Prostate gland (tissue), 2 donors: ENCODE measurements at regions of chr17 and their contacts with region 1.

Region 1: DNA sequence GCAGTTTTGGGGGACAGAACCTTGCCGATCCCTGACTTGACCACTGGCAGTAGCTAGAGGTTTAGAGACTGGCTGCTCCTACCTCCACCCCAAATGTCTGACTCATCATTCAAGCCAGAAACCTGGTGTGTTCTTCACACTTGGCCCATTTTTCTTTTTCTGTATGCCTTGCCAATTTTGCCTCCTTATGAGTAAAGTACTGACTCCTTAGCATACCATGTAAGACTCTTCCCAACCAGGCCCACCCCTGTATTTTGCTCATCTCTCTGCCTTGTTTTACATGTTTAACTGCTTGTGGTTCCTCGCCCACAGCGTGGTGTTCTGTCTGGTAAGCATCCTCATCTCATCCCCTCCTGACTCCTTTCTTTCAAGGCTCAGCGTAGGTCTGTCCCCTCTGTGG is 37.9 kb downstream of the NUP88 start:
- DNase-seq: no peak
- H3K4me3 ChIP-seq: no peak overlapping the region
- H3K27ac ChIP-seq: no peak overlapping the region
- H3K4me1 ChIP-seq: no peaks in the 10 kb centered on the region
- H3K27me3 ChIP-seq: no peaks in the 10 kb centered on the region
- CTCF ChIP-seq: no peak
- POLR2A ChIP-seq: no peak

Region 2: GRCh38 chr17:4709794-4710692 is 671.5 kb before region 1 on chr17 and contains the start of gene ARRB2:
- intact Hi-C with region 1: no loop called
- DNase-seq: peak; percentile 97
- H3K4me3 ChIP-seq: peak within 1 kb of the TSS; percentile 65 to 66
- H3K27ac ChIP-seq: peak within 1 kb of the TSS; percentile 87
- H3K4me1 ChIP-seq: peaks cover 5% of the 10 kb centered on the region
- H3K27me3 ChIP-seq: no peaks in the 10 kb centered on the region
- CTCF ChIP-seq: peak; percentile 26 to 90 (median 72)
- POLR2A ChIP-seq: peak; percentile 67
- total RNA-seq, gene ARRB2: 12.5 to 30.1 TPM

Region 3: GRCh38 chr17:5329784-5330557 is 51.6 kb before region 1 on chr17:
- intact Hi-C with region 1: loop called (anchors 10 kb)
- DNase-seq: no peak
- H3K4me3 ChIP-seq: no peak overlapping the region
- H3K27ac ChIP-seq: no peak overlapping the region
- H3K4me1 ChIP-seq: no peaks in the 10 kb centered on the region
- H3K27me3 ChIP-seq: no peaks in the 10 kb centered on the region
- CTCF ChIP-seq: no peak
- POLR2A ChIP-seq: no peak

Region 4: GRCh38 chr17:5419356-5419958 is 37.9 kb after region 1 on chr17 and contains the start of gene NUP88:
- intact Hi-C with region 1: no loop called
- DNase-seq: peak; percentile 95
- H3K4me3 ChIP-seq: peak within 1 kb of the TSS; percentile 65
- H3K27ac ChIP-seq: peak within 1 kb of the TSS; percentile 91
- H3K4me1 ChIP-seq: peaks cover 5% of the 10 kb centered on the region
- H3K27me3 ChIP-seq: no peaks in the 10 kb centered on the region
- CTCF ChIP-seq: no peak
- POLR2A ChIP-seq: peak; percentile 90
- total RNA-seq, gene NUP88: 64.8 to 105 TPM